Activated CD8-positive, alpha-beta T cell treated with anti-CD3 and anti-CD28 coated beads for 36 hours (primary cell): ENCODE measurements at regions of chr7 and their contacts with region 1.

Region 1: GRCh38 chr7:87600130-87601124 is at the start of gene ABCB1:
- DNase-seq: peak; percentile 74
- ATAC-seq: peak; percentile 84
- H3K4me3 Mint-ChIP-seq: peak within 1 kb of the TSS; percentile 70
- H3K27ac Mint-ChIP-seq: peak within 1 kb of the TSS; percentile 86
- H3K4me1 Mint-ChIP-seq: peaks cover 31% of the 10 kb centered on the region
- H3K27me3 Mint-ChIP-seq: peaks cover 8% of the 10 kb centered on the region
- CTCF ChIP-seq: no peak
- total RNA-seq, gene ABCB1: 8.8 to 8.9 TPM

Region 2: DNA sequence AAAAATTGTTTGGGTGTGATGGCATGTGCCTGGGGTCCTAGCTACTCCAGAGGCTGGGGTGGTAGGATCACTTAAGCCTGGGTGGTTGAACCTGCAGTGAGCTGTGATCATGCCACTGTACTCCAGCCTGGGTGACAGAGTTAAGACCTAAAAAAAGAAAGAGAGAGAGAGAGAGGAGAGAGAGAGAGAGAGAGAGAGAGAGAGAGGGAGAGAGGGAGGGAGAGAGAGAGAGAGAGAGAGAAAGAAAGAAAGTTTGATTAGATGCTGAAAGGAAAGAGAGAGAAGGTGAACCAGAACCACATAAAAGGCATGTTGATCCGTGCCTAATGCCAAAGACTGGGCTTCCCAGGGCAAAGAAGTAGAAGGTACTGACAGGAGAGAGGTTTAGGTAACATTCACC is 10.8 kb before region 1 on chr7:
- CTCF ChIA-PET with region 1: interaction called, 9 read pairs
- POLR2A ChIA-PET with region 1: interaction called, 13 read pairs
- intact Hi-C with region 1: no loop called
- DNase-seq: no peak
- ATAC-seq: no peak
- H3K4me3 Mint-ChIP-seq: no peak overlapping the region
- H3K27ac Mint-ChIP-seq: no peak overlapping the region
- H3K4me1 Mint-ChIP-seq: peaks cover 21% of the 10 kb centered on the region
- H3K27me3 Mint-ChIP-seq: no peaks in the 10 kb centered on the region
- CTCF ChIP-seq: no peak

Region 3: GRCh38 chr7:87628780-87629569 is 28.5 kb after region 1 on chr7:
- CTCF ChIA-PET with region 1: interaction called, 4 read pairs
- POLR2A ChIA-PET with region 1: interaction called, 18 read pairs
- intact Hi-C with region 1: no loop called
- DNase-seq: peak; percentile 64
- ATAC-seq: peak; percentile 14
- H3K4me3 Mint-ChIP-seq: peak overlapping the region; percentile 79
- H3K27ac Mint-ChIP-seq: no peak overlapping the region
- H3K4me1 Mint-ChIP-seq: peaks cover 10% of the 10 kb centered on the region
- H3K27me3 Mint-ChIP-seq: peaks cover 12% of the 10 kb centered on the region
- CTCF ChIP-seq: no peak

Region 4: DNA sequence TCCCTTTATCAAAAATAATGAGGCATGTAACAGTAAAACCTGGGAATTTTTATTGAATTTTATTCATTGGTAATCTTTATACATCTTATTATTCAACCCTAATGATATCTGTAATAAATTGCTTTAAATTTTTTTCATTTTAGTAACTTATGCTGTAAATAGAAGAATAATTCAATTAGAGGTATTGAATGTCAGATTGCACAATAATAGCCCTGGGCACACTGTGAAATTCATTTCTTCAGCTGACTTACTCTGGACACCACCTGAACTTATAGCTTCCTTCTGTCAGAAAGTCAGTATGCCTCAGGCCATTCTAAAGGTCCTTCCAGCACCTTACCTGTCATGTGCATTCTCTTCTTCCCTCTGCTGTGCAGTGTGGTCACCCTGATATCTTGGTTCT is 392.8 kb after region 1 on chr7:
- CTCF ChIA-PET with region 1: no interaction called
- POLR2A ChIA-PET with region 1: no interaction called
- intact Hi-C with region 1: no loop called
- DNase-seq: no peak
- ATAC-seq: no peak
- H3K4me3 Mint-ChIP-seq: no peak overlapping the region
- H3K27ac Mint-ChIP-seq: no peak overlapping the region
- H3K4me1 Mint-ChIP-seq: no peaks in the 10 kb centered on the region
- H3K27me3 Mint-ChIP-seq: no peaks in the 10 kb centered on the region
- CTCF ChIP-seq: no peak